Naive thymus-derived CD4-positive, alpha-beta T cell (primary cell): ENCODE measurements at regions of chr11 and their contacts with region 1.

Region 1: DNA sequence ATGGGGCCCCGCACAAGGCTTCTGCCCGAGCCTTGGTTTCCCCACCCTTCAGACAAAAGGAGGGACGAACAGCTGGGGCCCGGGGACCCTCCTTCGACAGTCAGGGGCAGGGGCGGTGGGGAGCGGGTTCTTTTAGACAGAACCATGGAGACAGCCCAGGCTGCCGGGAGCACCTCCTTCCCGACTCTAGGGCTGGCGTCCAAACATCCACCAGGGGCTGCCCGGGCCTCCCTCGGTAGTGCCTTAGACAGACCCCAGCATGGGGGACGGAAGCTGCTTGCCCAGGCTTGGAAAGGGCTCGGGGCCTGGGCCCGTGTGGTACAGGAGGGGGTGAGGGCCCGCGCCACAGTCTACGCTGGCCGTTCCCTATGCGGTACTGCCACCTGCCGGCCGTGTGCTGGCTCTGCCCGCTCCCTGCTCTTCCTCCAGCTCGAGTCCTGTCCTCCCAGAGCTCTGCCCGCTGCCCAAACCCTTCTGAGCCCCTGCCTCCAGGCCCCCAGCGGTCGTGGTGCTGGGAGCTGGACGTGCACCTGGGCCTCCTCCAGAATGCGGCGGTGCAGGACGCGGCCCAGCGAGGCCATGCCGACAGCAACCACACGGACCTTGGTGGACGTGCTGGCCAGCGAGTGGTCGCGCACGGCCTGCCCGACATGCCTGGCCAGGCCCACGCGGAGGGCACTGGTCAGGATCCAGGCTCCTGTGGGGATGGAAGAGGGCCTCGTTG is 20.1 kb downstream of the TSSC4 start:
- DNase-seq: peak; percentile 44 to 74 (median 70)
- ATAC-seq: peak; percentile 93
- H3K4me3 ChIP-seq: no peak overlapping the region
- H3K4me3 Mint-ChIP-seq: no peak overlapping the region
- H3K27ac ChIP-seq: no peak overlapping the region
- H3K27ac Mint-ChIP-seq: no peak overlapping the region
- H3K4me1 ChIP-seq: peaks cover 0 to 10% of the 10 kb centered on the region in 2 donors
- H3K4me1 Mint-ChIP-seq: peaks cover 0 to 3% (median 2%) of the 10 kb centered on the region in 7 donors
- H3K27me3 ChIP-seq: no peaks in the 10 kb centered on the region
- H3K27me3 Mint-ChIP-seq: no peaks in the 10 kb centered on the region

Region 2: DNA sequence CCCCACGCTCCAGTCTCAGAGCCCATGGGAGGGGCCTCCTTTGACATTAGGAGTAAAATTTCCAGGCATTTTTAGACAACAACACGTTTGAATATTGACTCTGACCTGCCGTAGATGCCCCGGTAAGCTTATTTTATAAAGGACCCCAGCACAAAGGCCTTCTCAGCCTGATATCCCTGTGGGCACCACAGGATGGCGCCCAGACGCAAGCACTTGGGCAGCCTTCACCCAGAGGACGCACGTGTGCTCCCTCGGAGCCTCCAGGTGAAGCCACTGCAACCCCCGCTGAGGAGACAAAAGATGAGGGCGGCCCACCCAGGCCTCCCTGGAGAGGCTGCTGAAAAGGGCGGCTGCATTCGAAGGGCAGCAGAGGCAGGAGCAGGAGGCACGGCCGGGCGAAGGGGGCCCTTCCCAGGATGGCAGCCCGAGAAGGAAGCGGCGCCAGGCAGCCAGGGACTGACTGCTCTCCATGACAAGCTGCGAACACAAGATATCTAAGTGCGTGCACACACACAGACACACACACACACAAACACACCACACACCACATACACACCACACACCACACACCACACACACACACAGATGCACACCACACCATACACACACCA is 233.9 kb before region 1 on chr11:
- CTCF ChIA-PET with region 1: interaction called, 25 read pairs
- POLR2A ChIA-PET with region 1: no interaction called
- intact Hi-C with region 1: loop called (anchors 1 kb)
- DNase-seq: peak; percentile 30 to 63 (median 47)
- ATAC-seq: peak; percentile 81
- H3K4me3 ChIP-seq: no peak overlapping the region
- H3K4me3 Mint-ChIP-seq: no peak overlapping the region
- H3K27ac ChIP-seq: no peak overlapping the region
- H3K27ac Mint-ChIP-seq: no peak overlapping the region
- H3K4me1 ChIP-seq: peaks cover 3 to 4% of the 10 kb centered on the region in 2 donors
- H3K4me1 Mint-ChIP-seq: peaks cover 0 to 11% (median 4%) of the 10 kb centered on the region in 7 donors
- H3K27me3 ChIP-seq: no peaks in the 10 kb centered on the region
- H3K27me3 Mint-ChIP-seq: peaks cover 0 to 13% (median 8%) of the 10 kb centered on the region in 5 donors

Region 3: DNA sequence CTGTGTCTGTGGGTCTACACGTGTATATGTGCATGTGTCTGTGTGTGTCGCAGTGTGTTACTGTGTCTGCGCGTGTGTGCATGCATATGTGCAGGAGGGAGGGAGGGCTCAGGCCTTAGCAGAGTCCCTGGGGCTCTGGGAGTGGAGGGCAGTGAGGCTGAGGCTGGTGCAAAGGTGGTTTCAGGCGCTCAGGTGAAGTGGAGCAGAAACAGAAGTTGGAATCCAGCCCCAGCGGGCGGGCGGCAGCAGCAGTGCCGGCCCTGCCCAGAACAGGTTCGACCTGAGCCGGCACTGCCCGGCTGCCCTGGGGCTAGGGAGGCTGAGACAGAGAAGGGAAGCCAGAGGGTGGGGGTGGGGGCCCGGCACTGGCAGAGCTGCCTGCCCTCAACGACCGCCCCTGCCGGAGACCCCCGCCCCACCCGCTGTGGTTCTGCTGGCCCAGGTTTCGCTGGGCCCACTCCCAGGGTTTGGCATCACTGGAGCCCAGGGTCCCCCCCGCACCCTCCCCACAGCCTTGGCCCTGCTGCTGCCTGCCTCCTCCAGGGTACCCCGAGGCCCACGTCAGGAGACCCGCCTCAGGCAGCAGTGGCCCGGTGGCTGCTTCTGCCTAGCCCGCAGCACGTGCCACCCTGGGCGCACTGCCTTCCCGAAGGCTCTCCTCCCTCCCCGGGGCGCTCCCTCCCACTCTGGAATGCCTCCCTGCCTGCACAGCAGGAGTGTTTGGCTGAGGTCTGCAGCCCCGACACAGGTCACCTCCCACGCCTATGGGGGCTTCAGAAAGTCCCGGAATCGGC is 163.5 kb before region 1 on chr11:
- CTCF ChIA-PET with region 1: no interaction called
- POLR2A ChIA-PET with region 1: no interaction called
- intact Hi-C with region 1: no loop called
- DNase-seq: no peak
- ATAC-seq: no peak
- H3K4me3 ChIP-seq: no peak overlapping the region
- H3K4me3 Mint-ChIP-seq: peak overlapping the region in 1 of 10 donors; percentile 35
- H3K27ac ChIP-seq: no peak overlapping the region
- H3K27ac Mint-ChIP-seq: no peak overlapping the region
- H3K4me1 ChIP-seq: no peaks in the 10 kb centered on the region
- H3K4me1 Mint-ChIP-seq: peaks cover 0 to 3% (median 0%) of the 10 kb centered on the region in 7 donors
- H3K27me3 ChIP-seq: no peaks in the 10 kb centered on the region
- H3K27me3 Mint-ChIP-seq: peaks cover 0 to 2% (median 0%) of the 10 kb centered on the region in 5 donors

Region 4: GRCh38 chr11:2269601-2270321 is 150.9 kb before region 1 on chr11:
- CTCF ChIA-PET with region 1: no interaction called
- POLR2A ChIA-PET with region 1: no interaction called
- intact Hi-C with region 1: loop called in 1 of 2 experiments (anchors 1 kb)
- DNase-seq: peak in 7 of 9 donors; percentile 15 to 53 (median 40)
- ATAC-seq: peak; percentile 56
- H3K4me3 ChIP-seq: no peak overlapping the region
- H3K4me3 Mint-ChIP-seq: peak overlapping the region in 6 of 10 donors; percentile 36 to 82 (median 62)
- H3K27ac ChIP-seq: no peak overlapping the region
- H3K27ac Mint-ChIP-seq: no peak overlapping the region
- H3K4me1 ChIP-seq: peaks cover 18 to 20% of the 10 kb centered on the region in 2 donors
- H3K4me1 Mint-ChIP-seq: peaks cover 15 to 25% (median 21%) of the 10 kb centered on the region in 7 donors
- H3K27me3 ChIP-seq: no peaks in the 10 kb centered on the region
- H3K27me3 Mint-ChIP-seq: peaks cover 0 to 44% (median 8%) of the 10 kb centered on the region in 5 donors

Region 5: GRCh38 chr11:2305140-2305840 is 115.4 kb before region 1 on chr11:
- CTCF ChIA-PET with region 1: interaction called, 167 read pairs
- POLR2A ChIA-PET with region 1: interaction called, 20 read pairs
- intact Hi-C with region 1: loop called (anchors 1 kb)
- DNase-seq: peak; percentile 62 to 84 (median 76)
- ATAC-seq: peak; percentile 65
- H3K4me3 ChIP-seq: peak overlapping the region; percentile 38
- H3K4me3 Mint-ChIP-seq: peak overlapping the region; percentile 77 to 98 (median 92)
- H3K27ac ChIP-seq: peak overlapping the region; percentile 81
- H3K27ac Mint-ChIP-seq: peak overlapping the region; percentile 86 to 96 (median 90)
- H3K4me1 ChIP-seq: peaks cover 40 to 55% of the 10 kb centered on the region in 2 donors
- H3K4me1 Mint-ChIP-seq: peaks cover 12 to 54% (median 36%) of the 10 kb centered on the region in 7 donors
- H3K27me3 ChIP-seq: no peaks in the 10 kb centered on the region
- H3K27me3 Mint-ChIP-seq: no peaks in the 10 kb centered on the region